ENCODE measurements at regions of chrX and their contacts with region 1.

Region 1: DNA sequence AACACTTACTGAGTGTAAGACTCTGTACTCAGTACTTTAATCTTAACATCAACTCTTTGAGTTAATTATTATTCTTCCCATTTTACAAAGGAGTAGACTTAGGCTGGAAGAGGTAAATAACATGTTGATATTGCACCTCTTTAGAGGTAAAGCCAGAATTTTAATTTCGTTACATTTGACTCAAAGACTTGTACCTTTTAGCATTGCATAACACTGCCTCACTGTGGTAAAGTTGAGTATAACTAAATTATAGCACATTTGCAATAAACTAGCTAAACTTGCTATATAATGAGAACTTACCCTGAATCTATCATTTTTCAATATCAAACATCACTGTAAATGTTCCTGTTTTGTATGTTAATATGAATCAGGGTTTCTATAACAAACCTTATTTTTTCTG is 218.5 kb downstream of the PRR32 start:
- DNase-seq: no peak
- ATAC-seq: no peak
- H3K4me3 ChIP-seq: no peak overlapping the region
- H3K27ac ChIP-seq: no peak overlapping the region
- H3K4me1 ChIP-seq: no peaks in the 10 kb centered on the region
- H3K27me3 ChIP-seq: no peaks in the 10 kb centered on the region

Region 2: GRCh38 chrX:126770194-126770593 is 267.9 kb before region 1 on chrX:
- intact Hi-C with region 1: loop called in 2 of 4 experiments (anchors 5 to 10 kb)
- DNase-seq: no peak
- ATAC-seq: peak in 1 of 2 donors; percentile 48
- H3K4me3 ChIP-seq: no peak overlapping the region
- H3K27ac ChIP-seq: no peak overlapping the region
- H3K4me1 ChIP-seq: no peaks in the 10 kb centered on the region
- H3K27me3 ChIP-seq: no peaks in the 10 kb centered on the region

Region 3: DNA sequence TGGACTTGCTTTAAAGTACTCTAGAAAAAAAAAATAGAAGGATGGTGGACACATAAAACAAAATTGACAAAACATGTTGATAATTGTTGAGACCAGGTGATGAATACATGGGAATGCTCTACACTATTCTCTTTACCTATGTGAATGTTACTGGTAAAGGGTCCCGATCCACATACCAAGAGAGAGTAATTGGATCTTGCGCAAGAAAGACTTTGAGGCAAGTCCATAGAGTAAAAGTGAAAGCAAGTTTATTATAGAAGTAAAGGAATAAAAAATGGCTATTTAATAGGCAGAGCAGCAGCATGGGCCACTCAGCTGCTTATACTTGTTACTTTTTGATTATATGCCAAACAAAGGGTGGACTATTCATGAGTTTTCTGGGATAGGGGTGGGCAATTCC is 252.5 kb before region 1 on chrX:
- intact Hi-C with region 1: loop called in 1 of 4 experiments (anchors 10 kb)
- DNase-seq: no peak
- ATAC-seq: no peak
- H3K4me3 ChIP-seq: no peak overlapping the region
- H3K27ac ChIP-seq: no peak overlapping the region
- H3K4me1 ChIP-seq: no peaks in the 10 kb centered on the region
- H3K27me3 ChIP-seq: no peaks in the 10 kb centered on the region